ENCODE measurements at regions of chr6 and their contacts with region 1.

Region 1: DNA sequence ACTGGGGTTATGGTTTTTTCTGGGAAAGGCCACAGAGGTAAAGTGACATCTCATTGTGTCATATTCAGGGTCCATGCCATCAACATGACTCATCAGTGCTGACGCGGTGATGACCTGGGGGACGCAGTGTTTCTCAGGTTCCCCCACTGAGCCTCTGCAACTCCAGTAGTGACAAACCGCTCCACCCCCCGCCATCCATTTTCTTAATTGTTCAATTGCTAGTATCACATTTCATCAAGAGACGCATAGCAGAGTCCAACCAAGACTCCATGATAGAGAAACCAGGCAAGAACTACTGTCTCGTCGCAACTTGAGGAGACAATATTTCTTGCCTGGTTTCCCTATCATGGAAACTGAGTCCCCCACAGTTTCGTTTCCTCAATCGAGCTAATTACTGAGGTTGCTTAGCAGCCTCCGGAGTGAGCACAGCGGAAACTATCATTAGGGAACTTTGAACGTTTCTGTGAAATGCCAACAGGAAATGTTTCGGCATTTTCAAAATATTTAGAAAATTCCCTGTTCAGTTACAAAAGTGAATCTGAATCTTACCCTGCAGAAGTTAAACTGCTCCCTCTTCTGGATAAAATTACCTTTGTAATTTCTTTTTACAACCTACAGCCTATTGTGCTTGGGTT is 12.2 kb upstream of the SERPINB1 start:
- DNase-seq: no peak
- ATAC-seq: peak; percentile 42
- H3K4me3 Mint-ChIP-seq: peak overlapping the region; percentile 74
- H3K27ac Mint-ChIP-seq: peak overlapping the region; percentile 97
- H3K4me1 Mint-ChIP-seq: peaks cover 81% of the 10 kb centered on the region
- H3K27me3 Mint-ChIP-seq: no peaks in the 10 kb centered on the region
- CTCF ChIP-seq: no peak

Region 2: DNA sequence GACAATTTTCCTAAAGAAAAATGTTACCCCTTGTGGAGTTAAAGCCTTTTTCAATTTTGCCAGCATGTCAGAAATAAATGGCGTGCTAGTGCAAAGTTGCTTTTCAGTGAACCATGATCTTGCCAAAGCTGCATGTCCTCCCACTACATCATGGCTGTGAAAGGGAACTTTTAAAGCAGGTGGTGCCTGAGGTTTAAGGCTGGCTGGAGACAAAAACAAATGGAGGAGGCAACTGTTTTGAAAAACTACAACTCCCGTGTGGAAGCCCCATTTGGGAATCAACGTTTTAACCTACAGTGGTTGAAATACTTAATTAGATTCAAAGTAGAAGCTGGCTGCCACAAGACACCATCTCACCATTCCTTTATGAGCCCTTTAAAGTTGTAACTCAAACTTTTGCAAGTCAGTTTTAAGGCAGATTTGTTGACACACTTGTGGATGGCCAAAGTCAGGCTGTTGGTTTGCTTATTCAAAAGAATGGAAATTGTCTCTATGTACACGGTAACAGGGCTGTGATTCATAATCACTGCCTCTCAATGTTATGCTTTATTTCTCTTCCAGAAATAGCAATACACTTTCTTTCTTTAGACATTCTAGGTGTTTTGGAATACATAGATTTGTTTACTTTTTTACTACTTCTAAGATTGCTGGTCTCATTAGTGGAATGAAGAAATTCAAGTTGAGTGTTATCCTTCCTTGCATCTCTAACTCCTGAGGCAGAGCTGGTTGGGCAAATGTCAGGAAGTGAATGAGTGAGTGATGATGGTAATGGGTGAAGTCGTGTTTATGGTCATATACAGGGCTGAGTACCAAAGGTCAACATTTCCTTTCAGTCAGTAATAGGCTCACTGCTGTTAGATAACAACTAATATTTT is 412.0 kb before region 1 on chr6:
- CTCF ChIA-PET with region 1: no interaction called
- POLR2A ChIA-PET with region 1: no interaction called
- intact Hi-C with region 1: no loop called
- DNase-seq: no peak
- ATAC-seq: no peak
- H3K4me3 Mint-ChIP-seq: no peak overlapping the region
- H3K27ac Mint-ChIP-seq: no peak overlapping the region
- H3K4me1 Mint-ChIP-seq: no peaks in the 10 kb centered on the region
- H3K27me3 Mint-ChIP-seq: no peaks in the 10 kb centered on the region
- CTCF ChIP-seq: no peak

Region 3: DNA sequence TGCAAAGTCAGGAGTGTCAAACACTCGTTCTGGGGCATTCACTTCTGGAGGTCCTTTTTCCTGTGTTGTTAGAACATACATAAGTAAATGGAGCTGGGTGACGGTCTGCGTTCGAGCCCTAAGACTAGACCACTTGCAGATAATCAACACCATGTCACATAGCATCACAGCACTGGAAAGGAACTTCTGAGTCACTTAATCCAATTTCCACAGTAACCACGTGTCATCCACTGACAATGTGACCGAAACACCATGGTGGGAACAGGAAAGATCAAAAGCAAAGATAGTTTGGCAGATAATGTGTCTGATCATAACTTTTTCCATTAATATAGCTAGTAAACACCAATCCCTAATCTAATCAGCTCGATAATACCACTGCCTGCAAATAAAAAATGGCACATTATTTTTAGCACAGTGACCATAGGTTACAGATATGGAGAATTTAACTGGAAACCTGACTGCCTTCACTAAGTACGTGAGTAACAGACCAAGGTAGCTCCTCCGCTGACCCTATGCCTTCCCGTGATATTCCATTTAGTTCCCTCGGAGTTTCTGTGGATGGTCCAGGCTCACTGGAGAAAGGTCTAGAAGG is 53.8 kb before region 1 on chr6:
- CTCF ChIA-PET with region 1: no interaction called
- POLR2A ChIA-PET with region 1: no interaction called
- intact Hi-C with region 1: no loop called
- DNase-seq: no peak
- ATAC-seq: no peak
- H3K4me3 Mint-ChIP-seq: no peak overlapping the region
- H3K27ac Mint-ChIP-seq: no peak overlapping the region
- H3K4me1 Mint-ChIP-seq: peaks cover 13% of the 10 kb centered on the region
- H3K27me3 Mint-ChIP-seq: no peaks in the 10 kb centered on the region
- CTCF ChIP-seq: no peak

Region 4: DNA sequence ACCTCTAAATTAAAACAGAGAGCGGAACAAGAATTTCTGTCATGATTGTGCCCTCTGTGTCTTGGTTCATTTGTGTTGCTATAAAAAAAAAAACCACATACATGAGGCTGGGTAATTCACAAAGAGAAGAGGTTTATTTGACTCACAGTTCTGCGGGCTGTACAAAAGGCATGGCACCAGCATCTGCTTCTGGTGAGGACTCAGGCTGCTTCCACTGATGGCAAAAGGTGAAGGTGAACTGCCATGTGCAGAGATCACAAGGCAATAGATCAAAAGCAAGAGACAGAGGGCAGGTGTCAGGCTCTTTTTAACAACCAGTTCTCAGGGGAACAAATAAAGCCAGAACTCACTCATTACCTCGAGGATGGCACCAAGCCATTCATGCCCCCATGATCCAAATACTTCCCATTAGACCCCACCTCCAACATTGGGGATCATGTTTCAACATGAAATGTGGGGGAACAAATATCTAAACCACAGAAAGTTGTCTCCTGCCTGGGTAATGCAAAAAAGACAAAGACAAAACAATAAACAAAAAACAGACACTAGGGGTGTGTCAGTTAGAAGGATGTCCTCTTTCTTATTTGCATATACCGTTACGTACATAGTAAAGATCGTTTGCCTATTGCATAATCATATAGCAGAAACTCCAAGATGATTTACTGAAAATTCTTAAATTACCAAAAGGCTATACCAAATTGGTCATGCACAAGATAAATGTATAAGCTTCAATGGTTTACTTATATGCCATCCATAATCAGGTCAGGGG is 32.3 kb after region 1 on chr6:
- CTCF ChIA-PET with region 1: interaction called, 4 read pairs
- POLR2A ChIA-PET with region 1: interaction called, 52 read pairs
- intact Hi-C with region 1: loop called (anchors 1 kb)
- DNase-seq: no peak
- ATAC-seq: peak; percentile 41
- H3K4me3 Mint-ChIP-seq: peak overlapping the region; percentile 42
- H3K27ac Mint-ChIP-seq: peak overlapping the region; percentile 92
- H3K4me1 Mint-ChIP-seq: peaks cover 83% of the 10 kb centered on the region
- H3K27me3 Mint-ChIP-seq: no peaks in the 10 kb centered on the region
- CTCF ChIP-seq: no peak

Region 5: DNA sequence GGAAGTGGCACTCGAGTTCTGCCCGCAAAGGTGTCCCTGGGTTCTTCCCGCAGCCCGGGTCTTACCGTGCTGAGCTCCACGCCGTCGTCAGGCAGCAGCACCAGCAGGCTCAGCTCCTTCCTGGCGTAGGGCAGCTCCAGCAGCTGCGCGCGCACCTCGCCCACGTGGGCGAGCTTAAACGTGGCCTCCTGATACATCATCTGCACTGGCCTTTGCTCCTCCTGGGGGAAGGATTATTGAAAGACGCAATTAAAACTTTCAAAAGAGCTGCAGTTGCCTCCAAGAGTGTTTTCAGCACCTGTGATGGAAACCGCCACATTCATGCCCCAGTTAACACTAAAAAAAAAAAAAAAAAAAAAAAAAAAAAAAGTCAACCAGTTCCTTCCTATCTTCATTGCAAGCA is 37.9 kb after region 1 on chr6:
- CTCF ChIA-PET with region 1: interaction called, 3 read pairs
- POLR2A ChIA-PET with region 1: interaction called, 139 read pairs
- intact Hi-C with region 1: loop called (anchors 1 kb)
- DNase-seq: peak; percentile 58
- ATAC-seq: peak; percentile 84
- H3K4me3 Mint-ChIP-seq: peak overlapping the region; percentile 58
- H3K27ac Mint-ChIP-seq: peak overlapping the region; percentile 87
- H3K4me1 Mint-ChIP-seq: peaks cover 71% of the 10 kb centered on the region
- H3K27me3 Mint-ChIP-seq: no peaks in the 10 kb centered on the region
- CTCF ChIP-seq: no peak

Region 6: GRCh38 chr6:2911171-2911570 is 57.3 kb after region 1 on chr6:
- CTCF ChIA-PET with region 1: interaction called, 100 read pairs
- POLR2A ChIA-PET with region 1: interaction called, 39 read pairs
- intact Hi-C with region 1: loop called (anchors 2 kb)
- DNase-seq: no peak
- ATAC-seq: peak; percentile 80
- H3K4me3 Mint-ChIP-seq: peak overlapping the region; percentile 51
- H3K27ac Mint-ChIP-seq: peak overlapping the region; percentile 88
- H3K4me1 Mint-ChIP-seq: peaks cover 43% of the 10 kb centered on the region
- H3K27me3 Mint-ChIP-seq: no peaks in the 10 kb centered on the region
- CTCF ChIP-seq: no peak

Region 7: DNA sequence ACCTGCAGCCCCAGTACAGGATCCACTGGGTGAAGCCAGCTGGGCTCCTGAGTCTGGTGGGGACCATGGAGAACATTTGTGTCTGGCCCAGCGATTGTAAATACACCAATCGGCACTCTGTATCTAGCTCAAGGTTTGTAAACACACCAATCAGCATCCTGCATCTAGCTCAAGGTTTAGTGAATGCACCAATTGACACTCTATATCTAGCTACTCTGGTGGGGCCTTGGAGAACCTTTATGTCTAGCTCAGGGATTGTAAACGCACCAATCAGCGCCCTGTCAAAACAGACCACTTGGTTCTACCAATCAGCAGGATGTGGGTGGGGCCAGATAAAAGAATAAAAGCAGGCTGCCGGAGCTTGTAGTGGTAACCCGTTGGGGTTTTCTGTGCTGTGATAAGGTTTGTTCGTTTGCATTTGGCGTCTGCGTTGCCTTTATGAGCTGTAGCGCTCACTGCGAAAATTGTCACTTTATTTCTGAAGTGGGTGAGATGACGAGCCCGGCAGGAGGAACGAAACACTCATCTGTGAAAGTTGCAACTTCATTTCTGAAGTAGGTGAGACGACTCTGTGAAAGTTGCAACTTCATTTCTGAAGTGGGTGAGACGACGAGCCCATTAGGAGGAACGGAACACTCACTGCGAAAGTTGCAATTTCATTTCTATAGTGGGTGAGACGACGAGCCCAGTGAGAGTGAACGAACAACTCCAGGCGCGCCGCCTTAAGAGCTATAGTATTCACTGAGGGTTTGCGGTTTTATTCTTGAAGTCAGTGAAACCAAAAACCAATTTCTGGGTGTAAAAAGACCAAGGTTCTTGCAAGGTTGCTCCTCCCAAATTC is 86.4 kb after region 1 on chr6:
- CTCF ChIA-PET with region 1: interaction called, 177 read pairs
- POLR2A ChIA-PET with region 1: interaction called, 12 read pairs
- intact Hi-C with region 1: no loop called
- DNase-seq: peak; percentile 39
- ATAC-seq: peak; percentile 81
- H3K4me3 Mint-ChIP-seq: peak overlapping the region; percentile 82
- H3K27ac Mint-ChIP-seq: peak overlapping the region; percentile 94
- H3K4me1 Mint-ChIP-seq: peaks cover 69% of the 10 kb centered on the region
- H3K27me3 Mint-ChIP-seq: no peaks in the 10 kb centered on the region
- CTCF ChIP-seq: no peak

Region 8: DNA sequence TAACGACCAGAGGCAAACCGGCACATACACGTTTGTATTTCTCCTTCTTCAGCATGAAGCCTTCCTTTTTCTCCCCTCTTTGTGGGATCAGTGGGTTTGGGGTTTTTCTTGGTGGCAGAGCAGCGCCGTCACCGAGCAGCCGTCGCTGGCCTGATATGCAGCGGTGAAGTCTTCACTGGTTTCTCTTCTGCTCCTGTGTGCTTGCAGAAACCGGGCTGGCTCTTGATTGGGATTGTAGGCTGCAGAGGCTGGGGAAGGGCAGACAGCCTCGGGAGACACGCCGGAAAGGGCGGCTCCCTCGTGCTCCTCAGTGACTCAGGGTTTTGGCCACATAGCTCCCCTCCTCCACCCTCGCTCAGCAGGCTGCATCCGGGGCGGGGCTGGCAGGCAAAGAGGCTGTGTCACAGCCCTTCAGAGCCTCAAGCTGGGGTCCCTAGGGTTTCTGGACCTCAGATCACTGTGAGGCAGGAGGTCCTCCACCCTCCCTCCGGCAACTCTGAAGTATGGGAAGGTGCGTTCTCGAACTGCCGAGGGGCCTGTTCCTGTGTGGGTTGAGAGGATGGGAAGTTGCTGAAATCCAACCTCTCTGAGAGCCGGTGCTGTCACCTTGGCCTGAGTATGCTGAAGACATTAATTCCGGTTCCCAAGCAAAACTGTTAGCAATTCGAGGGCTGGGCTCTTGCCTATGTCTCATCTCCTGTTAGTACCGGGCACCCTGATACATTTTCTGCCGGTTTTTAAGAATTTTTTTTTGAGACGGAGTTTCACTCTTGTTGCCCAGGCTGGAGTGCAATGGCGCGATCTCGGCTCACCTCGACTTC is 170.0 kb after region 1 on chr6:
- CTCF ChIA-PET with region 1: no interaction called
- POLR2A ChIA-PET with region 1: interaction called, 18 read pairs
- intact Hi-C with region 1: no loop called
- DNase-seq: peak; percentile 76
- ATAC-seq: peak; percentile 82
- H3K4me3 Mint-ChIP-seq: peak overlapping the region; percentile 90
- H3K27ac Mint-ChIP-seq: peak overlapping the region; percentile 88
- H3K4me1 Mint-ChIP-seq: peaks cover 54% of the 10 kb centered on the region
- H3K27me3 Mint-ChIP-seq: no peaks in the 10 kb centered on the region
- CTCF ChIP-seq: no peak

Measured in activated B cell treated with CpG ODN at 0.5 μM for 24 hours (primary cell).